ENCODE measurements at regions of chr19 and their contacts with region 1.

Region 1: DNA sequence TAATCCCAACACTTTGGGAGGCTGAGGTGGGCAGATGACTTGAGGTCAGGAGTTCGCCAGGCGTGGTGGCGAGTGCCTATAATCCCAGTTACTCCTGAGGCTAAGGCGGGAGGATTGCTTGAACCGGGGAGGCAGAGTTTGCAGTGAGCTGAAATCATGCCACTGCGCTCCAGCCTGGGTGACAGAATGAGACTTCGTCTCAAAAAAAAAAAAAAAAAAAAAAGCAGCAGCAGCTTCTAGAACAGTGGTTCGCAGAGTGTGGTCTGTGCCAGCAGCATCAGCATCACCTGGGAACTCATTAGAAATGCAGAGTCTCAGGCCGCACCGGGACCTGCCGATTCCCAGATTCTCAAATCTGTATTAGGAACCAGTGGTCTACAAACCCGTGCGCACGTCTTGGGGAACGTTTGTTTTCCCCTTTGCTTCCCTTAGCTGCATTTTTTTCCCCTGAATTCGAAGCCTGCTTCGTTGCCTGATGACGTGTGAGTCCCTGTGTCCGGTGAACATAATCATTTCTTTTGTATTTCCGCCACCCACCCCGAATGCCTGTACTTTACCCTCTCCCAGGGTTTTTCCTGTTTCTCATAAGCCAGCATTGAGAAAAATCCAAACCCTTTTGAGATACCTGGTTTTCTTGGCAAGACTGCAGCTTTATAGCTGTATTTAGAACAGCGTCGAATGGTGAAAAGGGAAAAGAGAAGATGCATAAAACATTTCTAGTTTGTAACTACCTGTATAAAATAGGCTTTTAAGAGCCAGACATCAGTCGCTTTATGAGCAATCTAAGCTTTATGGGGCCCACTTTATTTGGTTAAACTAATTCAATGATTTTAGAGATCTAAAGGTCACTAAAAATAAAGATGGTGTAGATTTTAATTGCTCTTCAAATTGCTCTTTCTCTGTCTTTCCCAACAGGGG is 49.8 kb downstream of the BICRA start:
- DNase-seq: peak in 2 of 10 donors; percentile 30
- H3K4me3 ChIP-seq: peak overlapping the region in 12 of 59 donors; percentile 0 to 37 (median 12)
- H3K27ac ChIP-seq: peak overlapping the region in 58 of 59 donors; percentile 39 to 97 (median 79)
- H3K27me3 ChIP-seq: no peaks in the 10 kb centered on the region
- CTCF ChIP-seq: no peak

Region 2: DNA sequence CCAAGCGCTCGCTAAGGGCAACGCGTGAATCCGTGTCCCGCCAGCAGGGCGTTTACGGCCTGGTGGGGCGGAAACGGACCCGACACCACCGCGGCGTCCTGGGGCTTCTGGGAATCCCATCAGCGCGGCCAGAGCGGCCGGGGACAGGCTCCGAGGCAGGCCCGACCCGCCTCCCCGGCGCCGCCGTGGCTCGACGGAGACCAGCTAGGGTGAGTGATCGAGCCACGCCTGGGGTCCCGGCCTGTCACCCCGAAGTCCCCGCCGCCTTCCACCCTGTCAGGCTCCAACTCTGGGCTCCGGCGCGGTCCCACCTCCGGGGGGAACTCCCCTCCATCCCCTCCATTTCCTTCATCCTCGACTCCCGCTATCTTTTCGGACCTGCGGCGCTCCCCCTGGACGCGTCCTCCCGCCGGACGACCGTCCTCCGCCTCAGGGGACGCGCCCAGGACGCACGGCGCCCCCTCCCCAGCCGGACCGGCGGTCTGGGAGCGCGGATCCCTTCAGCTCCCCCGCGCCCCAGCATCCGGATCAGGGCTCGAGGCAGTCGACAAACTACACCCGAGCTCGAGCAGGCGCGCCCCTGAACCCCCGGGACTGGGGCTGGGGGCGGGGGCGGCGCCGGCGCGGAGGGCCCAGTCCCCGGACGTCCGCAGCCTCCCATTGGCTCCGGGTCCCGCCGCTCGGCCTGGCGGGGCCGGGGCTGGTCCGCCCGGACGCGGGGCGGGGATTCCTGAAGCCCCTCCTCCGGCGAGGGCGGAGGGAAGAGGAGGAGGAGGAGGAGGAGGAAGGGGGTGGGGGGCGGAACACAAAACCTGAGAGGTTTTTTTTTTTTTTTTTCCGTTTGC is 50.4 kb before region 1 on chr19:
- intact Hi-C with region 1: loop called in 1 of 2 experiments (anchors 5 kb)
- DNase-seq: peak; percentile 76 to 98 (median 91)
- H3K4me3 ChIP-seq: peak overlapping the region; percentile 73 to 100 (median 98)
- H3K27ac ChIP-seq: peak overlapping the region; percentile 77 to 99 (median 95)
- H3K27me3 ChIP-seq: no peaks in the 10 kb centered on the region
- CTCF ChIP-seq: peak in 12 of 56 donors; percentile 1 to 20 (median 14)

Region 3: GRCh38 chr19:47623921-47624391 is 34.7 kb before region 1 on chr19:
- intact Hi-C with region 1: loop called in 1 of 2 experiments (anchors 2 kb)
- DNase-seq: no peak
- H3K4me3 ChIP-seq: no peak overlapping the region
- H3K27ac ChIP-seq: peak overlapping the region in 5 of 59 donors; percentile 3 to 46 (median 28)
- H3K27me3 ChIP-seq: no peaks in the 10 kb centered on the region
- CTCF ChIP-seq: no peak

Measured in dorsolateral prefrontal cortex (tissue), 120 donors.